HCT116 (cell line): ENCODE measurements at regions of chr1 and their contacts with region 1.

Region 1: DNA sequence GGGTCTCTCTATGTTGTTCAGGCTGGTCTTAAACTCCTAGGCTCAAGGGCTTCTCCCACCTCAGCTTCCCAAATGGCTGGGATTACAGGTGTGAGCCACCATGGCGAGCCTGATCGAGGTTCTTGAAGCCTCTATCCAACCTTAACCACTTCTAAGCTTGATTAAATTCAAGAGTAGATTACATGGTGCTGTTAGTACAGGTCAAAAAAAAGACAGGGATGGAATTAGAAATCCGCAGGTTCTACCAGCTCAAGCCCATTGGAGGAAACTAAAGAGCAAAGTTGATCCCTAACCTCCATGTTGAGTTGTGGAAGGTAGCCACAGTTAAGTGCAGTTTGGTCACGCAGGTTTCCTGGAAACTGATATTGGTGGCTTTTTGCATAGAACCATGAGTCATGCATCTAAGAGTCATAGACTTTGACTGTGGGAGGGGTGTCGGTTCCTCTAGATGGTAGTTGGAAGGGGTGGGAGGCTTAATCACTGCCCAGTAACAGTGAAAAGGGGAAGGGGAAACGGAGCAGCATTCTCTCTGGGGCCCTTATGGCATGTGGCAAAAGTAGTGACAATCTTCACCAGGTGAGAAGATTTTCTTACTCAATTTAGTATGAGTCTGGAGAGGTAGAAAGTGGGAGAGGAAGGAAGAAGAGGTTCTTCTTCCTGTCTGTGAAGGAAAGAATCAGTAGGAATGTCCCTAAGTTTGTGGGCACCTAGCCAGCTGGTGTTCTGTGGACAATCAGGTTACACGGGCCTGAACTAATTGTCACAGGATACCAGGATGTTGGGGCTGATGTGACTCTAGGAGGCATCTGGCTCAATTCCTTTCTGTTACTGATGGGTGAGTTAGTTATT is 7.0 kb downstream of the CD53 start:
- DNase-seq: no peak
- ATAC-seq: 0 out of 2 replicates have a peak, but pooled peaks have one; percentile 17
- H3K4me3 ChIP-seq: no peak overlapping the region
- H3K27ac ChIP-seq: no peak overlapping the region
- H3K4me1 ChIP-seq: peaks cover 4 to 11% of the 10 kb centered on the region in 2 experiments; a peak in 3 of 4 replicates
- H3K27me3 ChIP-seq: no peaks in the 10 kb centered on the region; the same call in 1 of the 2 replicates
- CTCF ChIP-seq: no peak
- POLR2A ChIP-seq: no peak
- RAD21 ChIP-seq: no peak

Region 2: GRCh38 chr1:110554871-110555801 is 324.8 kb before region 1 on chr1:
- CTCF ChIA-PET with region 1: no interaction called
- POLR2A ChIA-PET with region 1: no interaction called
- RAD21 ChIA-PET with region 1: no interaction called
- intact Hi-C with region 1: no loop called
- DNase-seq: no peak
- ATAC-seq: peak; percentile 84
- H3K4me3 ChIP-seq: no peak overlapping the region
- H3K27ac ChIP-seq: no peak overlapping the region
- H3K4me1 ChIP-seq: no peaks in the 10 kb centered on the region
- H3K27me3 ChIP-seq: peaks cover 58% of the 10 kb centered on the region
- CTCF ChIP-seq: peak in 2 of 3 experiments; percentile 42 to 54; a peak in 4 of 6 replicates
- POLR2A ChIP-seq: no peak
- RAD21 ChIP-seq: no peak; the same call in 1 of the 2 replicates

Region 3: DNA sequence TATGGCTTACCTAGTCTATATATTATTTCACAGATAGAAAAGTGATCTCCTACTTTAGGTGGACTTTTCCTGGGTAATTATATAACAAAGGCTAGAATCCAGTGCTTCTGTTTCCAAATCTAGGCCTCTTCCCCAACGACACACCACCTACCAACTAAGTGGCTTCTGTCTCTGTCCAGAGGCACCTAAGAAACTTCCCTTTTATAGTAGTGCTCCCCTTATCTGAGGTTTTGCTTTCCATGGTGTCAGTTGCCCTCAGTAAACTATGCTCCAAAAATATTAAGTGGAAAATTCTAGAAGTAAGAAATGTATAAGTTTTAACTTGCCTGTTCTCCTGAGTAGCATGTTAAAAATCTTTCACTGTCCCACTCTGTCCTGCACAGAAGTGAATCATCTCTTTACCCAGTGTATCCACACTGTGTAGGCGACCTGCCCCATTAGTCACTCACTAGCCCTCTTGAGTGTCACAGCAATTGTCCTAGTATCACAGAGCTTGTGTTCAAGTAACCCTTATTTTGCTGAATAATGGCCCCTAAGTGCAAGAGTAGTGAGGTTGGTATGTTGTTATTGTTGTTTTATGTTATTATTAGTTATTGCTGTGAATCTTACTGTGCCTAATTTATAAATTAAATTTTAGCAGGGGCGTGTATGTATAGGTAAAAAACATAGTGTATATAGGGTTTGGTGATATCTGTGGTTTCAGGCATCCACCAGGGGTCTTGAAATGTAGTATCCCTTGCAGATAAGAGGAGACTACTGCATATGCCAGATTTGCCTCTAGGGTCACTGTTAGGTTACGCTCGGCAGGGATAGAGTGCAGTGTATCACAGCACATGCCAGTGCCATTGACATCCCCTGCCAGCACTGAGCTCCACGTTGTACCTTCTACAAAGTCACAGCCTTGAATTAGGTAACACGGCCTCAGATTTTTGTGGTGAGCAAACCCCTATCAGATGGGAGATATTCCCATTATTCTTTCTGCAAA is 21.7 kb before region 1 on chr1:
- CTCF ChIA-PET with region 1: no interaction called
- POLR2A ChIA-PET with region 1: no interaction called
- RAD21 ChIA-PET with region 1: no interaction called
- intact Hi-C with region 1: loop called (anchors 2 kb)
- DNase-seq: no peak
- ATAC-seq: no peak
- H3K4me3 ChIP-seq: no peak overlapping the region
- H3K27ac ChIP-seq: no peak overlapping the region
- H3K4me1 ChIP-seq: no peaks in the 10 kb centered on the region
- H3K27me3 ChIP-seq: peaks cover 36% of the 10 kb centered on the region
- CTCF ChIP-seq: no peak
- POLR2A ChIP-seq: no peak
- RAD21 ChIP-seq: no peak